Heart right ventricle (tissue), 16 donors: ENCODE measurements at regions of chr4 and their contacts with region 1.

Region 1: DNA sequence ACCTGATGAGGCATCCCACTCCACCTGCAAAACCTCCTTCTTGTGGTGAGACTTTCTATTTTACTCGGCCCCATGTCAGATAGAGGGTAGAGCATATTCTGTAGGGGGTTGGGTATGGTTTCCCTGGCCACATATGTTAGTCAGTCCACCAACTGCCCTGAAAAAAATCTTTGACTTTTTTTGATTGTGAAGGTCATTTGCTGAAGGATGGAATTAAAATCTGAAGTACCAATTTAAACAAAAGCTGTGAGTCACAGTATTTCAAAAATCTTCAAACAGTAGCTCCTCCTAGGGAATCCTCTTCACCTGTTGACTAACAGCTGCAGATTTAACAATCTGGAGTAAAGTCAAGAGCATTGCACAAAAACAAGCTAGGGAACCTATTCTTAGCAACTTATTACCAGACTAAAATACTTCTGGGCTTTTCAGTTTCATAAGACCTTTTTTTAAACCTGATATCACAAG is 8.0 kb upstream of the CCDC110 start:
- DNase-seq: no peak
- ATAC-seq: peak in 6 of 8 donors; percentile 23 to 55 (median 42)
- H3K4me3 ChIP-seq: no peak overlapping the region
- H3K27ac ChIP-seq: no peak overlapping the region
- H3K4me1 ChIP-seq: peaks cover 0 to 8% (median 0%) of the 10 kb centered on the region in 9 donors
- H3K27me3 ChIP-seq: no peaks in the 10 kb centered on the region
- CTCF ChIP-seq: no peak

Region 2: GRCh38 chr4:185504098-185505047 is 24.8 kb after region 1 on chr4:
- intact Hi-C with region 1: loop called in 2 of 10 experiments (anchors 2 to 5 kb)
- DNase-seq: peak; percentile 81 to 88
- ATAC-seq: peak; percentile 88 to 96 (median 90)
- H3K4me3 ChIP-seq: peak overlapping the region in 4 of 10 donors; percentile 15 to 36 (median 22)
- H3K27ac ChIP-seq: peak overlapping the region in 9 of 10 donors; percentile 42 to 87 (median 77)
- H3K4me1 ChIP-seq: peaks cover 0 to 16% (median 5%) of the 10 kb centered on the region in 9 donors
- H3K27me3 ChIP-seq: peaks cover 0 to 3% (median 0%) of the 10 kb centered on the region in 7 donors
- CTCF ChIP-seq: peak in 2 of 9 donors; percentile 10 to 11